ENCODE measurements at regions of chr13 and their contacts with region 1.

Region 1: DNA sequence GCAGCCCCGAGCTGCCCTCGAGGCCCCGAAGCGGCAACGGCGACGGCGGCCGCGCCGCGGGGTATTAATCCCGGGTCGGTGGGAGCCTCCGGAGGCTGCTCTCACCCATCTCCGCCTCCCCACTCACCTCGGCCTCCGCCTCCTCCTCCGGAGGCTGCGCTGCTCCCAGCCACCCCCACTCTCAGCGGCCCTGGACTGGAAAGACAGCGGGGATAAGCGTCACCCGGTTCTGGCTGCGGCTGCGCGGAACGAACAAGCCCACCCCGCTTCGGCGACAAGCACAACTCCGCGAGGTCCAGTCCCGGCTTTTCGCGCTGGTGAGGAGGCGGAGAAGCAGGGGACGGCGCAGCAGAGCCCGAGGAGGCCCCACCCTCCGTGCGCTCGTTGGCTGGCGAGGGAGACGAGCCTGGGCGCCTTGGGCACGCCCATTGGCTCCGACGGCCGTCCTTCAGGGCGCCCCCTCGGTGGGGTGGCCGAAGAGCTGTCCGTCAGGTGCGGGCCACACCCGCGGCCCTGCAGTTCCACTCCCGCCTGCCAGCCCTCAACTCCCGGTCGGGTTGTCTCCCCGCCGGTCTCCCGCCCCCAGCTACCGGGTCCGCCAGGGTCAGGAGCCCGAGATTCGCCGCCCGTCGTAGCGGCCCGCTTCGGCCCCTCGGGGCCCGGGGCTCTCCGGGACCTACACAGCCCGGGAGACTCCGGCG is at the start of gene ZMYM5:
- DNase-seq: peak; percentile 98
- H3K4me3 Mint-ChIP-seq: peak within 1 kb of the TSS; percentile 94
- H3K27ac Mint-ChIP-seq: peak within 1 kb of the TSS; percentile 95
- H3K4me1 Mint-ChIP-seq: peaks cover 37% of the 10 kb centered on the region
- H3K27me3 Mint-ChIP-seq: no peaks in the 10 kb centered on the region
- total RNA-seq, gene ZMYM5: 8.1 to 8.5 TPM

Region 2: GRCh38 chr13:19587635-19588300 is 275.7 kb before region 1 on chr13:
- CTCF ChIA-PET with region 1: interaction called, 3 read pairs
- intact Hi-C with region 1: loop called (anchors 10 kb)
- DNase-seq: peak; percentile 58
- H3K4me3 Mint-ChIP-seq: peak overlapping the region; percentile 75
- H3K27ac Mint-ChIP-seq: peak overlapping the region; percentile 93
- H3K4me1 Mint-ChIP-seq: peaks cover 17% of the 10 kb centered on the region
- H3K27me3 Mint-ChIP-seq: no peaks in the 10 kb centered on the region

Region 3: DNA sequence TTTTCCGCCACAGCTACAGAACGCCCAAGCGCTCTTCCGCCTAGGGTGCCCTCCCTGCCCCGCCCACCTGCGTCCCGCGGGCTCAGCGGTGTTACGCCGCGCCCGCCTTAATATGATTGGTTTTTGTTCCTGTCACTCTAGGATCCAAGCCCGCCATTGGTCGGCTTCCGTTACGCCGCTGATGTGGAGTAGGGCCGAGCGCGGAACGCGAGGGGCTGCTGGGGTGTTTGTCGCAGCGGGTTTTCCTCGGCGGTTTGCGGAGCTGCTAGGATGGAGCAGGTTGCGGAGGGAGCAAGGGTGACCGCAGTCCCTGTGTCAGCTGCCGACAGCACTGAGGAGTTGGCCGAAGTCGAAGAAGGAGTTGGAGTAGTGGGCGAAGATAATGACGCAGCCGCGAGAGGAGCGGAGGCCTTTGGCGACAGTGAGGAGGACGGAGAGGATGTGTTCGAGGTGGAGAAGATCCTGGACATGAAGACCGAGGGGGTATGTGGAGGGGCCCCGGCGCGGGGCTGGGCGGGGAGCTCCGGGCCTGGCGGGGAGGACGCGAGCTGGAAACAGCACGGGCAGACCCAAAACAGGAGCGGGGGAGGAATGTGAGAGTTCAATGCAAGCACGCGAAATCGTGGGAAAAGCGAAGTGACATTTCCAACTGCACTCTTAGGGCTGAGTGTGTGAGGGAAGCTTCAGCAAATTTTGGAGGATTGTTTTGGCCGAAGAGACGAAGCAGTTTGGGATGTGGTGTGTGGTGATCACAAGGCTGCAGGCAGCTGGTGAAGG is 229.8 kb before region 1 on chr13 and contains the start of gene MPHOSPH8:
- CTCF ChIA-PET with region 1: no interaction called
- intact Hi-C with region 1: loop called (anchors 1 kb)
- DNase-seq: peak; percentile 94
- H3K4me3 Mint-ChIP-seq: peak within 1 kb of the TSS; percentile 100
- H3K27ac Mint-ChIP-seq: peak within 1 kb of the TSS; percentile 98
- H3K4me1 Mint-ChIP-seq: peaks cover 32% of the 10 kb centered on the region
- H3K27me3 Mint-ChIP-seq: no peaks in the 10 kb centered on the region
- total RNA-seq, gene MPHOSPH8: 20.6 to 21.5 TPM

Region 4: DNA sequence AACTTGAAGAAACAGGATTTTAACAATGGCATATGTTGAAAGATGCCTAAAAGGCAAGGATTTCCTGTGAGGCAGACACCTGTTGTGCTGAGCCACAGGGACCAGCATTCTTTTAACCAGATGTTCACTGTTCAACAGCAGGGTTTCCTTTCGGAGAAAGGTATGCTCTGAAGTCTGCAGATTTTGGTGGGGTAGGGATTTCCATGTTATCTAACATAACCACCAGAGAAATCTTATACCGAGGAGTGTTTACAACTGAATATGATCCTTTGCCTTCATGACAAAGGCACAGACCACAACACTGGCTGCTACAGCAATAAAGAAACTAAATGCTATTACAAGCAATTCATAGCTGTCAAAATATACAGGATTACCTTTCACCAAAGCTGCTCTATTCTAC is 182.0 kb before region 1 on chr13:
- CTCF ChIA-PET with region 1: no interaction called
- intact Hi-C with region 1: loop called (anchors 2 kb)
- DNase-seq: peak; percentile 38
- H3K4me3 Mint-ChIP-seq: no peak overlapping the region
- H3K27ac Mint-ChIP-seq: no peak overlapping the region
- H3K4me1 Mint-ChIP-seq: peaks cover 30% of the 10 kb centered on the region
- H3K27me3 Mint-ChIP-seq: no peaks in the 10 kb centered on the region

Region 5: GRCh38 chr13:19782049-19782726 is 81.3 kb before region 1 on chr13:
- CTCF ChIA-PET with region 1: no interaction called
- intact Hi-C with region 1: loop called (anchors 1 kb)
- DNase-seq: peak; percentile 74
- H3K4me3 Mint-ChIP-seq: peak overlapping the region; percentile 96
- H3K27ac Mint-ChIP-seq: peak overlapping the region; percentile 98
- H3K4me1 Mint-ChIP-seq: peaks cover 7% of the 10 kb centered on the region
- H3K27me3 Mint-ChIP-seq: peaks cover 3% of the 10 kb centered on the region

Region 6: DNA sequence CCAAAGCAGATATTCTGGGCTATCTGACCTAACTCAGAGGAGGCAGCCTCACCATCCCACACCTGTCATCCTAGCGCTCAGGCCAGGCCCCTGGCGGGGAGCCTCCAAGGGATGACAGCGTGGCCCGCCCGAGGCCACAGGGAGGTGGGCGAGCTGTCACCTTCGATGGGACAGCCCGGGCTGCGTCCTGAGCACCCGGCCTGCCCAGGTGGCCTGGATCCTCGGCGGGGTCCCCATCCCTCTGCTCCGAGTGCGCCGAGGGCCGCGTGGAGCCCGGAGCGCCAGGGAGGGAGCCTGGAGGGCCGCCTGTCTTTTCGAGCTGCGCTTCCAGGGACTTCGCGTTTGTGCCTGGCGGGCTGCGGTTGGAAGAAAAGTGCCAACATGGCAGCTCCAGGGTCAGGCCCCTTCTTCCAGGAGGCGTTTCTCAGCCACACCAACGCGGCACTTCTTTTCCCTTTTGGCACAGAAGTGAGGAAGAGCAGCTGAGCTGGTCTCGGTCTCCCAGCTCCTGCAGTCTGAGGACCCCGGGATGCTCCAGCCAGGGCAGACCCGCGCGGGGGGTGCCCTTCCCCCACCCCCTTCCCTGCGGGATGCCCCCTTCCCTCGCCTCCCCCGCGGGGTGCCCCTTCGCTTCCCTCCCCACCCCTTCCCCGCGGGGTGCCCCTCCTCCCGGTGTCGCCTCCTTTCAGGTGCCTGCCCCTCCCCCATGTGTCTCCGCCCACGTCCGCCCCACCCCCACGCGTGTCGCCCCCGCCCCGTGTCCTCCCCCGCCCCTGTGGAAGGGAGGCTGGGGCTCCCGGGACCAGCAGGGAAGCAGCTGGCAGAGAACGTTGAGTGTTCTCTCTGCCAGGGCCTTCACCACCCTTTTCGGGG is 255.0 kb after region 1 on chr13:
- CTCF ChIA-PET with region 1: interaction called, 3 read pairs
- intact Hi-C with region 1: loop called (anchors 2 kb)
- DNase-seq: peak; percentile 33
- H3K4me3 Mint-ChIP-seq: peak overlapping the region; percentile 83
- H3K27ac Mint-ChIP-seq: no peak overlapping the region
- H3K4me1 Mint-ChIP-seq: peaks cover 10% of the 10 kb centered on the region
- H3K27me3 Mint-ChIP-seq: no peaks in the 10 kb centered on the region